Activated B cell treated with CpG ODN at 0.5 μM for 24 hours (primary cell): ENCODE measurements at regions of chr10 and their contacts with region 1.

Region 1: DNA sequence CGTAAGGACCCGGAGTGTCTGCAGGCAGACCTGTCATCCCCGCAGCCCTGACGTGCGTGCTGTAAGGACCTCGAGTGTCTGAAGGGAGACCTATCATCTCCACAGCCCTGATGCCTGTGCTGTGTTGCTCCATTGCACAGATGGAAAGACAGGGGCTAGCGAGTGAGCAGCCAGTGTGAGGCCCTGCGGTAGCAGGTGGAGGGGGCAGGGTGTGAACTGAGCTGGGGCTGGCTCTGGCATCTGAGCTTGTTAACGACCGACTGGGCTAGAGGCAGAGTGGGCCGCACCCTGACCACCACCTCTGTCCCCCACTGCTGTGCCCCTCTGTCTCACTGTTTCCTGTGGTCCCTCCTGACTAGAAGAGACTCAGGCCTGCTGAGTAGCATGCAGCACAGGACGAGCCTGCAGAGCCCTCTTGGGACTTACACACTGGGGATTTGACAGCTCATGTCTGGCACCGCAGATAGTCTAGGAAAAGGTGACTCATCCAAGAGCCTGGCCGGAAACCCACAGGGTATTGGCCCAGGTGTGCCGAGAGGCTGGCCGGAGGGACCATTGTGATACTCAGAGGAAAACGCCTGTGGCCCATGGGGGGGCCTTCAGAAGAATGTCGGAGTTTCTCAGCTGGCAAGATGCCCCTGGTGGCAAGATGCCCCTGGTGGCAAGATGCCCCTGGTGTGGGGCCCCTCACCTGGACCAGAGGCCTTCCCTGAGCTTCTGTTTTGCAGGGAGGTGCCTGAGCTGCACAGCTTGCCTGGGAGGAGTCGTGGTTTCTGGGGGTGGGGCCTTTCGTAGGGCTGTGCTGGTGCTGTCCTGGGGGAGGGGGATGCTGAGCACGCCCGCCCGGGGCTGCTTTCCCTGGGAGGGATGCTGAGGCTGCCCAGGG is 34.3 kb downstream of the INPP5A start:
- DNase-seq: peak; percentile 78
- ATAC-seq: peak; percentile 77
- H3K4me3 Mint-ChIP-seq: no peak overlapping the region
- H3K27ac Mint-ChIP-seq: no peak overlapping the region
- H3K4me1 Mint-ChIP-seq: peaks cover 6% of the 10 kb centered on the region
- H3K27me3 Mint-ChIP-seq: no peaks in the 10 kb centered on the region
- CTCF ChIP-seq: no peak

Region 2: GRCh38 chr10:132458593-132459300 is 113.1 kb before region 1 on chr10:
- CTCF ChIA-PET with region 1: interaction called, 3 read pairs
- POLR2A ChIA-PET with region 1: interaction called, 3 read pairs
- intact Hi-C with region 1: loop called (anchors 1 kb)
- DNase-seq: peak; percentile 80
- ATAC-seq: peak; percentile 94
- H3K4me3 Mint-ChIP-seq: no peak overlapping the region
- H3K27ac Mint-ChIP-seq: no peak overlapping the region
- H3K4me1 Mint-ChIP-seq: peaks cover 3% of the 10 kb centered on the region
- H3K27me3 Mint-ChIP-seq: no peaks in the 10 kb centered on the region
- CTCF ChIP-seq: no peak

Region 3: DNA sequence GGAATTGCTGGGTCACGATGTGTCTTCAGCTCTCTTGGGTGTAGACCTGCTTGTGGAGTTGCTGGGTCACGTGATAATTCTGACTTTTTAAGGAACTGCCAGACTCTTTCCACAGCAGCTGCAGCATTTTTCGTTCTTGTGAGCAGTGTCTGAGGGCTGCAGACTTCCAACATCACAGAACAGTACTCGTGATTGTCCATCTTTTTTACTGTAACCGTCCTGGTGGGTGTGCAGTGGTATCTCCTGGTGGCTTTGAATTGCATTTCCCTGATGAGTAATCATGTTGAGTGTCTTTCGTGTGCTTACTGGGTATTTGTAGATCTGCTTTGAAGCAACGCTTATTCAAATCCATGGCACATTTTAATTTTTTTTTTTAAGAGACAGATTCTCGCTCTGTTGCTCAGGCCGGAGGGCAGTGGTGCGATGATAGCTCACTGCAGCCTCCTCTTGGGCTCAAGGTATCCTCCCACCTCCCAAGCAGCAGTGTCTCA is 11.6 kb before region 1 on chr10:
- CTCF ChIA-PET with region 1: interaction called, 12 read pairs
- POLR2A ChIA-PET with region 1: interaction called, 34 read pairs
- intact Hi-C with region 1: loop called (anchors 1 kb)
- DNase-seq: no peak
- ATAC-seq: peak; percentile 51
- H3K4me3 Mint-ChIP-seq: peak overlapping the region; percentile 60
- H3K27ac Mint-ChIP-seq: peak overlapping the region; percentile 76
- H3K4me1 Mint-ChIP-seq: peaks cover 53% of the 10 kb centered on the region
- H3K27me3 Mint-ChIP-seq: no peaks in the 10 kb centered on the region
- CTCF ChIP-seq: no peak

Region 4: GRCh38 chr10:132637477-132638129 is 65.7 kb after region 1 on chr10:
- CTCF ChIA-PET with region 1: interaction called, 4 read pairs
- POLR2A ChIA-PET with region 1: interaction called, 13 read pairs
- intact Hi-C with region 1: loop called (anchors 1 kb)
- DNase-seq: peak; percentile 14
- ATAC-seq: peak; percentile 66
- H3K4me3 Mint-ChIP-seq: peak overlapping the region; percentile 59
- H3K27ac Mint-ChIP-seq: peak overlapping the region; percentile 1
- H3K4me1 Mint-ChIP-seq: peaks cover 36% of the 10 kb centered on the region
- H3K27me3 Mint-ChIP-seq: no peaks in the 10 kb centered on the region
- CTCF ChIP-seq: no peak